CD8-positive, alpha-beta T cell (primary cell): ENCODE measurements at regions of chr19 and their contacts with region 1.

Region 1: DNA sequence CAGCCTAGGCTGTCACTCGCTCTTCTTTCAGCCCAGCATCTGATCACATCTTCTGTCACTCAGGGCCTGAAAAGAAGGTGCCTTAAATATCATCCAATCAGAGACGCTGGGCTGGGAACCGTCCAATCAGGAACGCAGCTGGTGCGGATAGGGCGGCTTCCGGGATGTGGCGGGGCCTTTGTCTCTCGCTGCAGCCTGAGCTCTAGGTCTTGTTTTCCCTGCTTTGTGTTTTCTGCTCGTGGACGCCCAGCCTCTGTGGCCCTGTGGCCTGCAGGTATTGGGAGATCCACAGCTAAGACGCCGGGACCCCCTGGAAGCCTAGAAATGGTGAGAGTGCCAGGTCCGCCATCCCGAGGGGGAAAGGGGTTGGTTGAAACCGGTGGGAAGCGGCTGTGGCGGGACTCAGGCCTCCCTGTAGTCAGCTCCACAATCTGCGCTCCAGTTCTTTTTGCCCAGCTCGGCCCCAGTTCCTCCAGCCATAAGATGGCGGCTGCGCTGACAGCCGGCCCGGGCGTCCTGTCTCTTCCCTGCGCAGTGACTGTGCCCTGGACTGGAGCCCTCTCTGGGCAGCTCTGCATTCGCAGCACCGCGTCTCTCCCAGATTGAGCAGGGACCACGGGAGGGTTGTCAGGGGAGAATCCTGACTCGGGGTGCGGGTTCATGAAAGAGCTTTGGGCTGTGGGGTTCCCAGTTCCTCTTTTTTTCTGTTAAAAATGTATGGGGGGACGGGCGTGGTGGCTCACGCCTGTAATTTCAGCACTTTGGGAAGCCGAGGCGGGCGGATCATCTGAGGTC is at the start of gene ZNF85:
- DNase-seq: peak; percentile 80 to 94 (median 90)
- ATAC-seq: peak; percentile 99
- H3K4me3 ChIP-seq: peak within 1 kb of the TSS; percentile 85 to 93
- H3K4me3 Mint-ChIP-seq: peak within 1 kb of the TSS; percentile 97
- H3K27ac ChIP-seq: peak within 1 kb of the TSS; percentile 82 to 88
- H3K27ac Mint-ChIP-seq: peak within 1 kb of the TSS; percentile 93
- H3K4me1 ChIP-seq: no peaks in the 10 kb centered on the region
- H3K4me1 Mint-ChIP-seq: peaks cover 23% of the 10 kb centered on the region
- H3K27me3 ChIP-seq: no peaks in the 10 kb centered on the region
- H3K27me3 Mint-ChIP-seq: no peaks in the 10 kb centered on the region
- CTCF ChIP-seq: no peak
- total RNA-seq, gene ZNF85: 3.7 to 4.9 TPM

Region 2: DNA sequence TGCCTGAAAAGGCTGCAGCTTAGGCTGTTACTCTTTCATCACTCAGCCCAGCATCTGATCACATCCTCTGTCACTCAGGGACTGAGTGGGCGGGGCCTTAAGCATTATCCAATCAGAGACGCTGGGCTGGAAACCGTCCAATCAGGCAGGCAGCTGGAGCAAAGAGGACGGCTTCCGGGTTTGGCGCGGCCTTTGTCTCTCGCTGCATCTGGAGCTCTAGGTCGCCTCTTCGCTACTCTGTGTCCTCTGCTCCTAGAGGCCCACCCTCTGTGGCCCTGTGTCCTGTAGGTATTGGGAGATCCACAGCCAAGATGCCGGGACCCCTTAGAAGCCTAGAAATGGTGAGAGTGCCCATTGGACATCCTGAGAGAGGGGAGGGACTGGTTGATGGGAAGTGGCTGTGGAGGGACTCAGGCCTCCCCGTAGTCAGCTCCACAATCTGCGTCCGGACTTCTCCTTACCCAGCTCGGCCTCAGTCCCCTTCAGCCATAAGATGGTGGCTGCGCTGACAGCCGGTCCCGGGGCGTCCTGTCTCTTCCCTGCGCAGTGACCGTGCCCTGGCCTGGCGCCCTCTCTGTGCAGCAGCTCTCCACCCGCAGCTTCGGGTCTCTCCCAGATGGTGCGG is 756.1 kb before region 1 on chr19 and contains the start of gene ZNF486:
- CTCF ChIA-PET with region 1: no interaction called
- POLR2A ChIA-PET with region 1: no interaction called
- intact Hi-C with region 1: loop called in 1 of 2 experiments (anchors 2 kb)
- DNase-seq: peak; percentile 83 to 97 (median 92)
- ATAC-seq: peak; percentile 97
- H3K4me3 ChIP-seq: peak within 1 kb of the TSS; percentile 74 to 95
- H3K4me3 Mint-ChIP-seq: peak within 1 kb of the TSS; percentile 97
- H3K27ac ChIP-seq: peak within 1 kb of the TSS; percentile 54 to 80
- H3K27ac Mint-ChIP-seq: peak within 1 kb of the TSS; percentile 92
- H3K4me1 ChIP-seq: peaks cover 13% of the 10 kb centered on the region
- H3K4me1 Mint-ChIP-seq: peaks cover 57% of the 10 kb centered on the region
- H3K27me3 ChIP-seq: no peaks in the 10 kb centered on the region
- H3K27me3 Mint-ChIP-seq: no peaks in the 10 kb centered on the region
- CTCF ChIP-seq: no peak
- total RNA-seq, gene ZNF486: 3.7 to 4.7 TPM

Region 3: GRCh38 chr19:20423381-20424197 is 499.7 kb before region 1 on chr19:
- CTCF ChIA-PET with region 1: no interaction called
- POLR2A ChIA-PET with region 1: no interaction called
- intact Hi-C with region 1: loop called in 1 of 2 experiments (anchors 2 kb)
- DNase-seq: peak in 7 of 9 experiments; percentile 4 to 62 (median 28)
- ATAC-seq: no peak
- H3K4me3 ChIP-seq: peak overlapping the region; percentile 52 to 88
- H3K4me3 Mint-ChIP-seq: peak overlapping the region; percentile 97
- H3K27ac ChIP-seq: peak overlapping the region; percentile 11 to 53
- H3K27ac Mint-ChIP-seq: peak overlapping the region; percentile 93
- H3K4me1 ChIP-seq: no peaks in the 10 kb centered on the region
- H3K4me1 Mint-ChIP-seq: peaks cover 8% of the 10 kb centered on the region
- H3K27me3 ChIP-seq: no peaks in the 10 kb centered on the region
- H3K27me3 Mint-ChIP-seq: no peaks in the 10 kb centered on the region
- CTCF ChIP-seq: no peak

Region 4: DNA sequence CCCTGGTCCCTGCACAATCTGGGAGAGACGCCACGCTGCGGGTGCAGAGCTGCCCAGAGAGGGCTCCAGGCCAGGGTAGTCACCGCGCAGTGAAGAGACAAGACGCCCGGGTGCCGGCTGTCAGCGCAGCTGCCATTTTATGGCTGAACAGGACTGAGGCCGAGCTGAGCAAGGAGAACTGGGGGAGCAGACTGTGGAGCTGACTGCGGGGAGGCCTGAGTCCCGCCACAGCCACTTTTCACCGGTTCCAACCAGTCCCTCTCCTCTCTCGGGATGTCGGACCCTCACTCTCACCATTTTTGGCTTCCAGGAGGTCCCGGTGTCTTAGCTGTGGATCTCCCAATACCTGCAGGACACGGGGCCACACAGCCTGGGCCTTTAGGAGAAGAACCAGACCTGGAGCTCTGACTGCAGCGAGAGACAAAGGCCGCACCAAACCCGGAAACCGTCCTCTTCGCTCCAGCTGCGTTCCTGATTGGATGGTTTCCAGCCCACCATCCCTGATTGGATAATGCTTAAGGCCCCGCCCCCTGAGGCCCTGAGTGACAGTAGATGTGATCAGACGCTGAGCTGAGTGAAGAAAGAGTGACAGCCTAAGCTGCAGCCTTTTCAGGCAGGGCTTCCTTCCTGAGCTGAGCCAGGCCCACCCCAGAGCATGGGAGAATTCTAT is 262.0 kb before region 1 on chr19 and contains the start of gene ZNF626:
- CTCF ChIA-PET with region 1: no interaction called
- POLR2A ChIA-PET with region 1: interaction called, 8 read pairs
- intact Hi-C with region 1: loop called (anchors 5 kb)
- DNase-seq: peak; percentile 78 to 97 (median 90)
- ATAC-seq: peak; percentile 98
- H3K4me3 ChIP-seq: peak within 1 kb of the TSS; percentile 67 to 91
- H3K4me3 Mint-ChIP-seq: peak within 1 kb of the TSS; percentile 94
- H3K27ac ChIP-seq: peak within 1 kb of the TSS; percentile 73 to 91
- H3K27ac Mint-ChIP-seq: peak within 1 kb of the TSS; percentile 97
- H3K4me1 ChIP-seq: peaks cover 12% of the 10 kb centered on the region
- H3K4me1 Mint-ChIP-seq: peaks cover 43% of the 10 kb centered on the region
- H3K27me3 ChIP-seq: no peaks in the 10 kb centered on the region
- H3K27me3 Mint-ChIP-seq: no peaks in the 10 kb centered on the region
- CTCF ChIP-seq: no peak
- total RNA-seq, gene ZNF626: 5.7 to 6.6 TPM

Region 5: GRCh38 chr19:20999731-21000352 is 76.6 kb after region 1 on chr19:
- CTCF ChIA-PET with region 1: no interaction called
- POLR2A ChIA-PET with region 1: interaction called, 8 read pairs
- intact Hi-C with region 1: loop called (anchors 1 to 2 kb)
- DNase-seq: peak; percentile 67 to 94 (median 82)
- ATAC-seq: peak; percentile 100
- H3K4me3 ChIP-seq: peak overlapping the region; percentile 48 to 69
- H3K4me3 Mint-ChIP-seq: peak overlapping the region; percentile 85
- H3K27ac ChIP-seq: no peak overlapping the region
- H3K27ac Mint-ChIP-seq: no peak overlapping the region
- H3K4me1 ChIP-seq: no peaks in the 10 kb centered on the region
- H3K4me1 Mint-ChIP-seq: peaks cover 3% of the 10 kb centered on the region
- H3K27me3 ChIP-seq: no peaks in the 10 kb centered on the region
- H3K27me3 Mint-ChIP-seq: no peaks in the 10 kb centered on the region
- CTCF ChIP-seq: no peak

Region 6: DNA sequence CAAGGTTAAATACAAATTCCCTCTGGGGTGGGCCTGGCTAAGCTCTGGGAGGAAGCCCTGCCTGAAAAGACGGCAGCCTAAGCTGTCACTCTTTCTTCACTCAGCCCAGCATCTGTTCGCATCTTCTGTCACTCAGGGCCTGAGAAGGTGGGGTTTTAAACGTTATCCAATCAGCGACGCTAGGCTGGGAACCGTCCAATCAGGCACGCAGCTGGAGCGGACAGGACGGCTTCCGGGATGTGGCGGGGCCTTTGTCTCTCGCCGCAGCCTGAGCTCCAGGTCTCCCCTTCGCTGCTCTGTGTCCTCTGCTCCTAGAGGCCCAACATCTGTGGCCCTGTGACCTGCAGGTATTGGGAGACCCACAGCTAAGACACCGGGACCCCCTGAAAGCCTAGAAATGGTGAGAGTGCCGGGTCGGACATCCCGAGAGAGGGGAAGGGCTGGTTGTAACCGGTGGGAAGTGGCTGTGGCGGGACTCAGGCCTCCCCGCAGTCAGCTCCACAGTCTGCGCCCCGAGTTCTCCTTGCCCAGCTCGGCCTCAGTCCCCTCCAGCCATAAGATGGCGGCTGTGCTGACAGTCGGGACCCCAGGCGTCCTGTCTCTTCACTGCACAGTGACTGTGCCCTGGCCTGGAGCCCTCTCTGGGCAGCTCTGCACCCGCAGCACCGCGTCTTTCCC is 218.7 kb after region 1 on chr19 and contains the start of gene ZNF431:
- CTCF ChIA-PET with region 1: no interaction called
- POLR2A ChIA-PET with region 1: interaction called, 11 read pairs
- intact Hi-C with region 1: loop called (anchors 2 to 5 kb)
- DNase-seq: peak; percentile 79 to 96 (median 88)
- ATAC-seq: peak; percentile 99
- H3K4me3 ChIP-seq: peak within 1 kb of the TSS; percentile 68 to 90
- H3K4me3 Mint-ChIP-seq: peak within 1 kb of the TSS; percentile 97
- H3K27ac ChIP-seq: peak within 1 kb of the TSS; percentile 65 to 85
- H3K27ac Mint-ChIP-seq: peak within 1 kb of the TSS; percentile 97
- H3K4me1 ChIP-seq: peaks cover 9% of the 10 kb centered on the region
- H3K4me1 Mint-ChIP-seq: peaks cover 46% of the 10 kb centered on the region
- H3K27me3 ChIP-seq: no peaks in the 10 kb centered on the region
- H3K27me3 Mint-ChIP-seq: no peaks in the 10 kb centered on the region
- CTCF ChIP-seq: no peak
- total RNA-seq, gene ZNF431: 31.2 to 32.4 TPM

Region 7: DNA sequence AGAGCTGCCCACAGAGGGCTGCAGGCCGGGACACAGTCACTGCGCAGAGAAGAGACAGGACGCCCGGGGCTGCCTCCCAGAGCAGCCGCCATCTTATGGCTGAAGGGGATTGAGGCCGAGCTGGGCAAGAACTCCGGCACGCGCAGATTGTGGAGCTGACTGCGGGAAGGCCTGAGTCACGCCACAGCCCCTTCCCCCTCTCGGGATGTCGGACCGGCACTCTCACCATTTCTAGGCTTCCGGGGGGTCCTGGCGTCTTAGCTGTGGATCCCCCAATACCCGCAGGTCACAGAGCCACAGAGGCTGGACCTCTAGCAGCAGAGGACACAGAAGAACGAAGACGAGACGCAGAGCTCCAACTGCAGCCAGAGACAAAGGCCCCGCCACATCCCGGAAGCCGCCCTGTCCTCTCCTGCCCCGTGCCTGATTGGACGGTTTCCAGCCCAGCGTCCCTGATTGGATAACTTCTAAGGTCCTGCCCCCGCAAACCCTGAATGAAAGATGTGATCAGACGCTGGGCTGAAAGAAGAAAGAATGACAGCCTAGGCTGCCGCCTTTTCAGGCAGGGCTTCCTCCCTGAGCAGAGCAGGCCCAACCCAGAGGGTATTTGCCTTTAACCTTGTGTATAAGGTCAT is 912.7 kb after region 1 on chr19 and contains the start of gene ZNF43:
- CTCF ChIA-PET with region 1: no interaction called
- POLR2A ChIA-PET with region 1: interaction called, 5 read pairs
- intact Hi-C with region 1: loop called in 1 of 2 experiments (anchors 10 kb)
- DNase-seq: peak; percentile 85 to 96 (median 93)
- ATAC-seq: peak; percentile 97
- H3K4me3 ChIP-seq: peak within 1 kb of the TSS; percentile 84 to 85
- H3K4me3 Mint-ChIP-seq: peak within 1 kb of the TSS; percentile 98
- H3K27ac ChIP-seq: peak within 1 kb of the TSS; percentile 75 to 84
- H3K27ac Mint-ChIP-seq: peak within 1 kb of the TSS; percentile 97
- H3K4me1 ChIP-seq: peaks cover 9% of the 10 kb centered on the region
- H3K4me1 Mint-ChIP-seq: peaks cover 34% of the 10 kb centered on the region
- H3K27me3 ChIP-seq: no peaks in the 10 kb centered on the region
- H3K27me3 Mint-ChIP-seq: no peaks in the 10 kb centered on the region
- CTCF ChIP-seq: no peak
- total RNA-seq, gene ZNF43: 29.9 to 31.8 TPM